ENCODE measurements at regions of chr5 and their contacts with region 1.

Region 1: DNA sequence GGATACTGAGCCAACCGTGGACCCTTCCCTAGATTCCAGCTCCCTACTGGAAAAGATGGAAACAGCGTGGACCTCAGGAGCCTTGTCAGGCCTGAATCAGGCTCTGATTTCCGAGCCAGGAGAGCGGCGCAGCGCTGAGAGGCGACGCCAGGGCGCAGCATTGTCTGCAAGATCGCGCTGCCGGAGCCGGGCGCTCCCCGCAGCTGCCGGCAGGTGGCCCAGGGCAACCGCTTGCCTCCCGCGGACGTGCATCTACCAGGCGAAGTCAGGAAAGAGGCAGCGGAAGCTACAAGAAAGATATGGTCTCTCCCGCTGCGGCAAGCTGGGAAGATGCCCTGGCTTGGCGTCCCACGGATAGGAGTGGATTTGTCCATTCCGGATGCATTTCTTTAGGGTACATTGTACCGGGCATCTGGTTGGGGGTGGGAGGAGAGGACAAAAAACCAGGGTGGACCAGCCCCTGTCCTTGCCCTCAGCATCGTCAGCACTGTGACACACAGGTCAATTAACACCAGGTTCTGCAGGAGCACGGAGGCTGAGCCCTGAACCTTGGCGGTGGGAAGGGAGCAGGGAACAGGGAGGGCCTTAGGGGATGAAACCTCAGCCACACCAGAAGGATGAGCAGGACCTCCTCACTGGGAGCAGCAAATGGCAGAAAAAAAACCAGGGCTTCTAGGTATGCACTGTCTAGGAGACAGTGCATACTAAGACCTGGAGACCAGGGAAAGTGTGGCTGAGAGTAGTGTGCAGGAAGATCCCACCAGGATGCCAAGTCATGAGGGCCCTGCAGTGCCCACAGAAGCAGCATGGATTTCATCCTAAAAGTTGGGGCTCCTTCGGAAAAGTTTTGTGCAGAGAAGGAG is 55.9 kb downstream of the SFXN1 start:
- H3K4me3 ChIP-seq: no peak overlapping the region; the same call in 1 of the 2 replicates
- H3K27ac ChIP-seq: no peak overlapping the region
- H3K4me1 ChIP-seq: no peaks in the 10 kb centered on the region
- CTCF ChIP-seq: peak; percentile 99

Region 2: DNA sequence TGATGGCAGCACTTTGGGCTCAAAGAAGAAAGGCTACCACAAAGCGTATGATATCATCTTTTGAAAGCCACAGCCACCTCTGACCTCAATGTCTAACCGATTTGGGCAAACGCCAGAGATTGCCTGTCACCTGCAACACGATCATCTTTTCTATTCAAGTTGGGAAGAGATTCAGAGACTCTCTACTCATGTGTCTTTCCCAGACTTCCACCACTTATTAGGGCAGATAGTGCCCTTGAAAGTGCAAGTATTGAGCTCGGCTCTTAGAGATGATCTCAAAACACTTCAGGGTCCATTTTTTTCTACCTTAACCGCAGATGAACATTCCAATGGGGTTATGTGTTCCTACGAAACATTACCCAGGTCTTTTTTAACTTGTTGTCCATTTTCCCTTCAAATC is 304.0 kb before region 1 on chr5:
- CTCF ChIA-PET with region 1: no interaction called
- POLR2A ChIA-PET with region 1: no interaction called
- H3K4me3 ChIP-seq: no peak overlapping the region
- H3K27ac ChIP-seq: no peak overlapping the region
- H3K4me1 ChIP-seq: no peaks in the 10 kb centered on the region
- CTCF ChIP-seq: no peak

Region 3: DNA sequence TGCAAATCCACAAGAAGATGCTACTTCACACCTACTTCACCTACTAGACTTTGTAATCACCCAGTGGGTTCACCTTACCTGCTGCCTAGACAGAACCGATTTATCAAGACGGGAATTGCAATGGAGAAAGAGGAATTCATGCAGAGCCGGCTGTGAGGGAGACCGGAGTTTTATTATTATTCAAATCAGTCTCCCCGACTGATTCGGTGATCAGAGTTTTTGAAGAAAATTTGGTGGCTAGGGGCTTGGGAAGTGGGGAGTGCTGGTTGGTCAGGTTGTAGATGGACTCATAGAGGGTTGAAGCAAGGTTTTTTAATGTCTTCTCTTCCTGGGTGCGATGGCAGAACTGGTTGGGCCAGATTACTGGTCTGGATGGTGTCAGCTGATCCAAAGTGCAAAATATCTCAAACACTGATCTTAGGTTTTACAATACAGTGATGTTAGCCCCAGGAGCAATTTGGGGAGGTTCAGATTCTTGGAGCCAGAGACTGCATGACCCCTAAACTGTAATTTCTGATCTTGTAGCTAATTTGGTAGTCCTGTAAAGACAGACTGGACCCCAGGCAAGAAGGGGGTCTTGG is 32.5 kb before region 1 on chr5:
- CTCF ChIA-PET with region 1: no interaction called
- POLR2A ChIA-PET with region 1: no interaction called
- H3K4me3 ChIP-seq: no peak overlapping the region
- H3K27ac ChIP-seq: no peak overlapping the region
- H3K4me1 ChIP-seq: no peaks in the 10 kb centered on the region
- CTCF ChIP-seq: no peak

Region 4: DNA sequence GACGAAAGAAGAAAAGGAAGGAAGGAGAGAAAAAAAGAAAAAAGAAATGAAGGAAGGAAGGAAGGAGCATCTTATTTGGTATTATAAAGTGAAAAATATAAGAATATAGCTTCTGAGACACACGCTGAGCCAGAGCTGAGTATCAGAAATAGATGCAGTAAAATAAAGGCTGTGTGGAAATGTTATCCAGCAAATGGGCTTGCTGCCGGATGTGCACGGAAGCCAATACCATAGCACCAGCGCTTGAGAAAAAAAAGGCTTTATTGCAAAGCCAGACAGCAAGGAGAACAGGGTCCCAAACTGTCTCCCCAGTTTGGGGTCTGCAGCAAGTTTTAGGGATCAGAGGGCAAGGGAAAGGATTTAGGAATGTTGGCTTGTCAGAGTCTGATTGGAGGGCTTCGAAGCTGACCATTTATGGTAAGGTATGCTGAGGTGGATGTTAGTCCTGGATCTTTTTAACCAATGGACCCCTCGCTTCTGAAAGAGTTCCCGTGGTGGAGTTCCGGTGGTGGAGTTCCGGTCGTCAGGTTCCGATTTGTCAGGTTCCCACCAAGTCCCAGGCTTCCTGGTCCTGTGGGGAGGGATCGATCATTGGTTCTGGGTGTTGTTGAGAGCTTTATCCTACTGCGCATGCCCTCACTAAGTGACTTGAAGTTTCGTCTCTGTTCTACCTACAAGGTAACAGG is 14.5 kb after region 1 on chr5:
- CTCF ChIA-PET with region 1: interaction called, 21 read pairs
- POLR2A ChIA-PET with region 1: no interaction called
- H3K4me3 ChIP-seq: no peak overlapping the region
- H3K27ac ChIP-seq: no peak overlapping the region
- H3K4me1 ChIP-seq: no peaks in the 10 kb centered on the region
- CTCF ChIP-seq: no peak

Region 5: DNA sequence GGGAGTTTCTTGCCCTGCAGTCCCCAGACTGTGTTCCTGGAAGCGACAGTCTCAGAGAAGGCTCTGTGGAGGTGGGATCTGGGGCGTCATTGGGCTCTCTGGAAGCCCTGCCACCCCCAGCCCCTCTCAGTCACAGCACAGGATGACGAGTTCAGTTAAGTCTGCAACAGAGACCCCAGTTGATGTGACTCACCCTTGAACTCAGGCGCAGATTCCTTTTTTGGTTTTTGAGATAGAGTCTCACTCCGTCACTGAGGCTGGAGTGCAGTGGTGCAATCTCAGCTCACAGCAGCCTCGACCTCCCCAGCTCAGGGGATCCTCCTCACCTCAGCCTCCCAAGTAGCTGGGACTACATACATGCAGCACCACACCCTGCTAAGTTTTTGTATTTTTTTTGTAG is 131.9 kb after region 1 on chr5:
- CTCF ChIA-PET with region 1: interaction called, 10 read pairs
- POLR2A ChIA-PET with region 1: no interaction called
- H3K4me3 ChIP-seq: no peak overlapping the region
- H3K27ac ChIP-seq: no peak overlapping the region
- H3K4me1 ChIP-seq: no peaks in the 10 kb centered on the region
- CTCF ChIP-seq: no peak

Region 6: DNA sequence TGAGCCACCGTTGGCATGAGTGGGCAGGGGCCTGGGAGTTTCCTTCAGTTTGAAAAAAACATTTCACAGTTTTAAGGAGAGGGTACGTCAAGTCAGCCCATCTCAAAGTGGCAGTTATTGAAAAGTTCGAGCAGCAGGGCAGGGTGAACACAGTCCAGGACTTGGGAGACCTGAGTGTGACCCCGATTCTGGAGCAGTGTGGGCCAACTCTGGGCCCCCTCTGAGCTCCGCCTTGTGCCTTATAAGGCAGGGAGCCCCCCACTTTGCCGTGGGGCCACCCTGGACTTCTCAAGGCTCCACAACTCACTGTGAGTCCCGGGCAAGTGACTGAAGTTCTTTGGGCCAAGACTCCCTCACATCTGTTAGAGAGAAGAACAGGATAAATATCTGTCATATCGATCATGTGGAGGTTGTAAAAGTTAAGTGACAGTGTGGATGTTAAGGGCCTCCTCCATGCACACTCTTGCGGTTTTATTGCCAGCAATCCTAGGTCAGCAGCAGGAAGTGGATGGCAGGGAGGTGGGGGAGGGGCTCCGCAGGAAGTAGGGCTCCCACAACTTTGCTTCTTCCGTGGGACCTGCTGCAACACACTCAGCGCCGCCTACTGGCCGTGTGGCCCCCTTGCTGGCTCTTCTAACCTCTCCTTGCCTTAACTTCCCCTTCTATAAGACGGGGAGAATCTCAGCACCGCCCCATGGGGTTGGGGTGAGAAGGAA is 162.0 kb after region 1 on chr5:
- CTCF ChIA-PET with region 1: interaction called, 32 read pairs
- POLR2A ChIA-PET with region 1: no interaction called
- H3K4me3 ChIP-seq: no peak overlapping the region
- H3K27ac ChIP-seq: no peak overlapping the region; the same call in 1 of the 2 replicates
- H3K4me1 ChIP-seq: no peaks in the 10 kb centered on the region
- CTCF ChIP-seq: peak; percentile 49; the same call in 1 of the 2 replicates

Region 7: DNA sequence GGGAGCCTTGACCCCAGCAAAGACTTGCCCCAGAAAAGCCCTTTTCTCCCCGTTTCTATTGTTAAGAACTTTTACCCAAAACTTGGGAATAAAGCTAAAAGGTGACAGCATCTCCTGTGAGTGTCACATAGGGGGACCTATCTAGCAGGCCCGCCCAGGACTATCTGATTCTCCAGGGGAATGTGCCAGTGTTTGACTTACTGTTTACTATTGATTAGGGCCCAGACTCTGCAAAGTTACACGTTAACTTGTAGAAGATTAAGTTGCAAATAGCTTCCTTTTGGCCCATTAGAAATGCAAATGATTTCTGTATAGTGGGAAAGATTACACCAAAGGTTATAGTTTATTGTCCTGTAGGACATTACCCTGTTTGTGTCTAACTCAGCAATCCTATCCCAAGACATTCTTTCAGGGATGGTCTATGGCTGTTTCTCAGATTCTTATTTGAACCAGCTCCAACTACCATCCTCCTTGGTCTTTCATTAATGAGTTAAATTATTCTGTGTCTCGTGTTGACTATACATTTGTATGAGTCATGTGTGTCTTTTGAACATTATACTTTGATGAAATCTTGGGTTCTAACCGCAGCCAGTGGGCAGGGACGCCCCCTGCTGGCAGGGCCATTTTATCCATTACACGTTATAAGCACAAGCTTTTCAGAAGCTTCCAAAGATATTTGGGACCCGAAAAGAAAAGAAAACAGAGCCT is 184.3 kb after region 1 on chr5:
- CTCF ChIA-PET with region 1: interaction called, 111 read pairs
- POLR2A ChIA-PET with region 1: no interaction called
- H3K4me3 ChIP-seq: no peak overlapping the region
- H3K27ac ChIP-seq: no peak overlapping the region
- H3K4me1 ChIP-seq: no peaks in the 10 kb centered on the region
- CTCF ChIP-seq: no peak

Measured in HEK293 (cell line).